ENCODE measurements at regions of chr9 and their contacts with region 1.

Region 1: GRCh38 chr9:72586388-72587130 is 65.2 kb downstream of the TMC1 start:
- DNase-seq: peak; percentile 44
- H3K4me3 Mint-ChIP-seq: no peak overlapping the region
- H3K27ac Mint-ChIP-seq: peak overlapping the region; percentile 50
- H3K4me1 Mint-ChIP-seq: peaks cover 47% of the 10 kb centered on the region
- H3K27me3 Mint-ChIP-seq: no peaks in the 10 kb centered on the region

Region 2: DNA sequence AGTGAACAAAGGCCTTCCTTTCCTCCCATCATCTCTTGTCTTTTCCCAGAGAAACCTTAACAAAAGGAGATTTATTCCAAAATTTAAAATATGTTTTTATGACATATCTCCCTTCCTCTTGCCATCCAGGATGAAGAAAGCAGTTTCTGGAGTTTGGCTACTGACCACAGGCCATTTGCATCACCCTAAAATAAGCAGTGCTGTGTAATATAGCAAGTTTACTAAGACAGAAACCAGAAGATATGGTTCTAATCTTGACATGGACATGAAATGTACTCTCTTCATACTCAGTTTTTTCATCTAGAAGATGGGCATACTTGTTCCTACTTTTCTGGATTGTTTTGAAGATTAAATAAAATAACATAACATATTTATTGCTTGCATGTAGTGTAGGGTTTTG is 171.4 kb before region 1 on chr9:
- CTCF ChIA-PET with region 1: no interaction called
- POLR2A ChIA-PET with region 1: no interaction called
- intact Hi-C with region 1: no loop called
- DNase-seq: no peak
- H3K4me3 Mint-ChIP-seq: no peak overlapping the region
- H3K27ac Mint-ChIP-seq: no peak overlapping the region
- H3K4me1 Mint-ChIP-seq: no peaks in the 10 kb centered on the region
- H3K27me3 Mint-ChIP-seq: no peaks in the 10 kb centered on the region

Region 3: GRCh38 chr9:72443855-72444254 is 142.7 kb before region 1 on chr9:
- CTCF ChIA-PET with region 1: no interaction called
- POLR2A ChIA-PET with region 1: interaction called, 5 read pairs
- intact Hi-C with region 1: loop called (anchors 2 kb)
- DNase-seq: peak; percentile 28
- H3K4me3 Mint-ChIP-seq: peak overlapping the region; percentile 25
- H3K27ac Mint-ChIP-seq: peak overlapping the region; percentile 83
- H3K4me1 Mint-ChIP-seq: peaks cover 28% of the 10 kb centered on the region
- H3K27me3 Mint-ChIP-seq: no peaks in the 10 kb centered on the region

Region 4: GRCh38 chr9:72509635-72510034 is 76.9 kb before region 1 on chr9:
- CTCF ChIA-PET with region 1: interaction called, 4 read pairs
- POLR2A ChIA-PET with region 1: no interaction called
- intact Hi-C with region 1: loop called (anchors 2 kb)
- DNase-seq: no peak
- H3K4me3 Mint-ChIP-seq: no peak overlapping the region
- H3K27ac Mint-ChIP-seq: peak overlapping the region; percentile 86
- H3K4me1 Mint-ChIP-seq: peaks cover 19% of the 10 kb centered on the region
- H3K27me3 Mint-ChIP-seq: no peaks in the 10 kb centered on the region

Region 5: DNA sequence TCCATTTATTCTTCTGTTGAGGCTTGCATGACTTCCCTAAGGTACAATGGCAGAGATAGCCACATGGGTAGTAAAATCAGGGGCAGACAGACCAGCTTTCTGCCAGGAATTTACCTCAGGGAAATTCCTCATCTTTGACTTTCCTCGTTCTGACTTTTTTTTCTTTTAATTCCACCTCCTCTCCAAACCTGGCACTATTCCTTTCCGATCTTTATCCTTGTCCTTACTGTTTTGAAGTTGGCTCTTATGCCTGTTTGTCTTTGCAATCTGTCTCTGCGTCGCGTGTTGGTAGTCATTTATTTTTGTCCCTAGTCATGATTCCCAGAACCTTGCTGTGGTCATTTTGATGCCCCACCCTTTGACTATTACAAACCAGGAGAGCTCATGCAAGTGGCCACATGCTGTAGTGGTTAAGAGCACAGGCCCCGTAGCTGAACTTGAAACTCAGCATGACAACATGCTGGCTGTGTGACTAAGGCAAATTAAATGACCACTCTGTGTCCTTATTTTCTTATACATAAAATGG is 46.1 kb before region 1 on chr9:
- CTCF ChIA-PET with region 1: no interaction called
- POLR2A ChIA-PET with region 1: no interaction called
- intact Hi-C with region 1: loop called (anchors 1 kb)
- DNase-seq: no peak
- H3K4me3 Mint-ChIP-seq: no peak overlapping the region
- H3K27ac Mint-ChIP-seq: no peak overlapping the region
- H3K4me1 Mint-ChIP-seq: peaks cover 34% of the 10 kb centered on the region
- H3K27me3 Mint-ChIP-seq: no peaks in the 10 kb centered on the region

Region 6: GRCh38 chr9:72839085-72839484 is 252.5 kb after region 1 on chr9:
- CTCF ChIA-PET with region 1: no interaction called
- POLR2A ChIA-PET with region 1: no interaction called
- intact Hi-C with region 1: no loop called
- DNase-seq: no peak
- H3K4me3 Mint-ChIP-seq: no peak overlapping the region
- H3K27ac Mint-ChIP-seq: no peak overlapping the region
- H3K4me1 Mint-ChIP-seq: no peaks in the 10 kb centered on the region
- H3K27me3 Mint-ChIP-seq: peaks cover 4% of the 10 kb centered on the region

Region 7: DNA sequence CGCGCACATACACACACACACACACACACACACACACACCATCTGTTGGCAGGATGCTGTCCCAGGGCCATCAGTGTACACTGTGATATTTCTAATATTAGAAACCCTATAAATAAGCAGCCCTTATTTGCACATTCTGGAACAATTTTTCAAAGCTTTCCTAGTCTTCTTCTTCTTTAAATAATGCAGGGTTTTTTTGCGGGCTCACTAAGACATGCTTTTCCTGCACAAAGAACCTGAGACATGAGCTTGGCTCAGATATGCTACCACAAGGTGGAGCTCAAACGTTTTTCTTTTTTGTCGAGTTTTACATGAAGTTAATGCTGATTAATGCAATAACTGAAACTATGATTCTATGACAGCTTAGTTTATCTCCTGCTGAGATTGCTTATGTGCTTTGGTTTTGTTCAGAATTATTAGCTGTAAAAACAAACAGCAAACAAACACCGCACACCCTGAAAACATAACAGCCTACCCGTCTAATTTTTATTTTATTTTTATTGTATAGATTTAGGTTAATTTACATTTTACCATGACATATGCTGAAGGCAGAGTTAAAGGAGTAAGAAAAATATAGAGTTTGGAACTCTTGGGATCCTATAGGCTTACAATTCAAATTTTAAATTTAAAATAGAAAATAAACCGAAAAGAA is 270.5 kb after region 1 on chr9:
- CTCF ChIA-PET with region 1: no interaction called
- POLR2A ChIA-PET with region 1: no interaction called
- intact Hi-C with region 1: no loop called
- DNase-seq: no peak
- H3K4me3 Mint-ChIP-seq: no peak overlapping the region
- H3K27ac Mint-ChIP-seq: no peak overlapping the region
- H3K4me1 Mint-ChIP-seq: no peaks in the 10 kb centered on the region
- H3K27me3 Mint-ChIP-seq: no peaks in the 10 kb centered on the region

Measured in activated CD4-positive, alpha-beta memory T cell treated with anti-CD3 and anti-CD28 coated beads for 36 hours (primary cell).